Caco-2 (cell line): ENCODE measurements at regions of chr4 and their contacts with region 1.

Region 1: GRCh38 chr4:98688411-98689290 is 30.2 kb upstream of the TSPAN5 start:
- DNase-seq: no peak
- H3K4me3 ChIP-seq: no peak overlapping the region
- H3K4me3 Mint-ChIP-seq: no peak overlapping the region
- H3K27ac Mint-ChIP-seq: no peak overlapping the region
- H3K4me1 ChIP-seq: peaks cover 24% of the 10 kb centered on the region
- H3K4me1 Mint-ChIP-seq: peaks cover 34% of the 10 kb centered on the region
- H3K27me3 ChIP-seq: no peaks in the 10 kb centered on the region
- H3K27me3 Mint-ChIP-seq: no peaks in the 10 kb centered on the region
- CTCF ChIP-seq: no peak

Region 2: GRCh38 chr4:98626350-98626749 is 62.3 kb before region 1 on chr4:
- CTCF ChIA-PET with region 1: no interaction called
- POLR2A ChIA-PET with region 1: no interaction called
- intact Hi-C with region 1: no loop called
- DNase-seq: no peak
- H3K4me3 ChIP-seq: no peak overlapping the region
- H3K4me3 Mint-ChIP-seq: no peak overlapping the region
- H3K27ac Mint-ChIP-seq: peak overlapping the region; percentile 40
- H3K4me1 ChIP-seq: peaks cover 37% of the 10 kb centered on the region
- H3K4me1 Mint-ChIP-seq: peaks cover 39% of the 10 kb centered on the region
- H3K27me3 ChIP-seq: no peaks in the 10 kb centered on the region
- H3K27me3 Mint-ChIP-seq: no peaks in the 10 kb centered on the region
- CTCF ChIP-seq: no peak

Region 3: DNA sequence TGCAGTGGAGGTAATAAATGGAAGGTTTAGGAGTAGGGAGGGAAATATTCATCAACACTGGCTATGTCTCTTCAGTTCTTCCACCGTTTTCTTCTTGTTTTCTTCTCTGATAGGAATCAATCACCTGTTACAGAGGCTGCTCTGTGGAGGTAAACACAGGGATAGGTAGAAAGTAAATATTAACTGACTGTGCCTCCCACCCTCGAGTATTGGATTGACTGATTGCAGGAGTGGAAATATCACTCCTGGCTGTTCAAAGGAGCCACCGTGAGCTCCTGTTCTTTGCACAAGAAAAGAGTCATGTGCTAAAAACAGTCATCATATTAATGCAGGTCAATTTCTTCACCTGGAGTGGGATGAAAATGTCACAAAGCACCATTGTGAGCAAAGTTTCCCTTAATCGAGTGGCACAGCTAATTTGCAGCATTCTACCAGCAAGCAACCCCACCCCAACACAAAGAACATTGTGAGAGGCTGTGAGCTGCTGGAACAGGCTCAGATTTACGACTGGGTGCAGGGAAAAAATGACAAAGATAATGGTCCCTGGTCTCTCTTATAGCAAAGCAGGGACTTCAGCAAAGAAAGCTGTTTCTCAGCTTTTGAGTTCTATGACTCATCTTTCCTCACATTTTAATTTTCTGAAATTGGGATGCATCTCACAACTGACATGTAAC is 83.4 kb after region 1 on chr4:
- CTCF ChIA-PET with region 1: no interaction called
- POLR2A ChIA-PET with region 1: no interaction called
- intact Hi-C with region 1: loop called (anchors 5 kb)
- DNase-seq: peak in 1 of 2 experiments; percentile 25
- H3K4me3 ChIP-seq: no peak overlapping the region
- H3K4me3 Mint-ChIP-seq: peak overlapping the region; percentile 57
- H3K27ac Mint-ChIP-seq: peak overlapping the region; percentile 81
- H3K4me1 ChIP-seq: peaks cover 12% of the 10 kb centered on the region
- H3K4me1 Mint-ChIP-seq: peaks cover 24% of the 10 kb centered on the region
- H3K27me3 ChIP-seq: no peaks in the 10 kb centered on the region
- H3K27me3 Mint-ChIP-seq: no peaks in the 10 kb centered on the region
- CTCF ChIP-seq: no peak

Region 4: DNA sequence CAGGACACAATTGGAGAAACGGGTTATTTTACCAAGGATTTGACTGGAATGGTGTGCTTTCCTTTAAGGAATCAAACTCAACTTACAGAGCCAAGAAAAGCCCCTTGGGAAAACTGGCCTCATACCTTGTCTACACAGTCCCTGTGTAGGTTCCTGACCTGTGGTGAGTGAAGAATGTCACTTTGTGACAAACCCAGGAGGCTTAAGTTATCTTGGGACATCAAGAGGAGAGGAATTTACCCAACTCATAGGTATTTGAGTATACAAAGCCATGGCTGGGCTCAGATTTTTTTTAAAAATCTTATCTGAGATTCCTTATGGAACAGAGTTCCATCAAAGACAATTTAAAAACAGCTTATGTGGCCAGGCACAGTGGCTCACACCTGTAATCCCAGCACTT is 128.2 kb after region 1 on chr4:
- CTCF ChIA-PET with region 1: no interaction called
- POLR2A ChIA-PET with region 1: no interaction called
- intact Hi-C with region 1: loop called (anchors 5 kb)
- DNase-seq: peak; percentile 81 to 84
- H3K4me3 ChIP-seq: no peak overlapping the region
- H3K4me3 Mint-ChIP-seq: no peak overlapping the region
- H3K27ac Mint-ChIP-seq: peak overlapping the region; percentile 94
- H3K4me1 ChIP-seq: peaks cover 42% of the 10 kb centered on the region
- H3K4me1 Mint-ChIP-seq: peaks cover 39% of the 10 kb centered on the region
- H3K27me3 ChIP-seq: no peaks in the 10 kb centered on the region
- H3K27me3 Mint-ChIP-seq: no peaks in the 10 kb centered on the region
- CTCF ChIP-seq: no peak